B cell (primary cell): ENCODE measurements at regions of chr19 and their contacts with region 1.

Region 1: DNA sequence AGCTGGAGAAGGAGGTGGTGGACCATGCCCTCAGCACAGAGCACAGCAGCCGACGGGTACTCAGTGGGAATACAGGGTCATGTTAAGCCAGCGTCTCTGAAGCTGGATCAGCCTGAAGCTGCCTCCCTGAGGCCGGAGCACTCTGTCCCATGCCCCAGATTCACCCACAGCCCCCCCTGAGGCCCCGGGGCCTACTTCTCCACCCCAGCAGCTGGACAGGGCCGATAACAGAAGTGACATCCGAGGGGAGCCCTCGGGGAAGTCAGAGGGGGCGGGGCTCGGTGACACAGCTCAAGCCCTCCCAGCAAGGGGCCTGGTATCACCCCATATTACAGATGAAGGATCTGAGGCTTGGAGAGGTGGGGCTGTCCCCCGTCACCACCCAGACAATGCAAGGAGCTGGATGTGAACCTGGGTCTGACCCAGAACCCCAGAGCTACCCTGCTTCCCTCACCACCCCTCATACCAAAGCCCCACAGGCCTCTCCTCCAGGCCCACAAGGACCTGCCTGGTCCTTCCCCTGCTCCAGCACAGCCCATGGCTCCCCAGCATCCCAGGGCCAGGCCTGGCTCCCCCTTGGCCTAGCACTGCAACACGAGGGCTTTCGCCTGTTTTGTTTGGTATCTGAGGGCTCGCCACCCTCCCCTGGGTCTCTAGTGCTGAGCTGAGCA is 5.7 kb downstream of the R3HDM4 start:
- DNase-seq: peak; percentile 86
- ATAC-seq: peak; percentile 28
- H3K4me3 ChIP-seq: peak overlapping the region in 4 of 5 experiments; percentile 6 to 38 (median 28)
- H3K4me3 Mint-ChIP-seq: peak overlapping the region; percentile 85
- H3K27ac ChIP-seq: peak overlapping the region; percentile 97 to 99
- H3K27ac Mint-ChIP-seq: peak overlapping the region; percentile 100
- H3K4me1 ChIP-seq: peaks cover 52 to 65% of the 10 kb centered on the region in 2 donors
- H3K4me1 Mint-ChIP-seq: peaks cover 52% of the 10 kb centered on the region
- H3K27me3 ChIP-seq: no peaks in the 10 kb centered on the region
- H3K27me3 Mint-ChIP-seq: no peaks in the 10 kb centered on the region
- CTCF ChIP-seq: no peak

Region 2: GRCh38 chr19:892243-893050 is 14.9 kb before region 1 on chr19:
- CTCF ChIA-PET with region 1: interaction called, 35 read pairs
- POLR2A ChIA-PET with region 1: interaction called, 56 read pairs
- intact Hi-C with region 1: loop called (anchors 1 kb)
- DNase-seq: peak; percentile 50
- ATAC-seq: peak; percentile 60
- H3K4me3 ChIP-seq: peak overlapping the region; percentile 18 to 91 (median 76)
- H3K4me3 Mint-ChIP-seq: peak overlapping the region; percentile 95
- H3K27ac ChIP-seq: peak overlapping the region; percentile 68 to 98
- H3K27ac Mint-ChIP-seq: peak overlapping the region; percentile 100
- H3K4me1 ChIP-seq: peaks cover 5 to 37% of the 10 kb centered on the region in 2 donors
- H3K4me1 Mint-ChIP-seq: peaks cover 17% of the 10 kb centered on the region
- H3K27me3 ChIP-seq: no peaks in the 10 kb centered on the region
- H3K27me3 Mint-ChIP-seq: no peaks in the 10 kb centered on the region
- CTCF ChIP-seq: no peak

Region 3: DNA sequence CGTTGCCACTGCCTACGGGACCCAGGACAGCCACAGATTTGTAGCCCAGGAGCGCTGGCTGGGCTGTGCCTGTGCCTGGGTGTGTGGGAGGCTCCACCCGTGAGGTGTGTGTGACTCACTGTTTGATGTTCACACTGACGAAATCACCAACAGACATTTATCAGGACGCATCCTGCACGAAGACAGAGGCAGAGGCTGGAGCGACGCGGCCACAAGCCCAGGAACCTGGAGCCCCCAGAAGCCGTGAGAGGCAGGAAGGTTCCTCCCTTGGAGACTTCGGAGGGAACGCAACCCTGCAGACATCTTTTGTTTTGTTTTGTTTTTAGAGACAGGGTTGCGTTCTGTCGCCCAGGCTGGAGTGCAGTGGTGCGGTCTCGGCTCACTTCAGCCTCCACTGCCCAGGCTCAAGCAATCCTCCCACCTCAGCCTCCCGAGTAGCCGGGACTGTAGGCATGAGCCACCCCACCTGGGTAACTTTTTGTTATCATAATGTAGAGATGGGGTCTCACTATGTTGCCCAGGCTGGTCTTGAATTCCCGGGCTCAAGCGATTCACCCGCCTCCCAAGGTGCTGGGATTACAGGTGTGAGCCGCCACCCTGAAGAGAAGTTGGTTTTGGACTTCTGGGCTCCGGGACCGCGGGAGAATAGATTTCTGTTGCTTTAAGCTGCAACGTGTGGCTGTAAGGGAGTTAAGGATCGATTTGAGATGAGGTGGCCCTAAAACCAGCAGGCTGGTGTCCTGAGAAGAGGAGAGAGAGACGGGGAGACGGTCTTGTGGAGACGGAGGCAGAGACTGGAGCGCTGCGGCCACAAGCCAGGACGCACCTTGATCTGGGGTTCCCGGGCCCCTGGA is 51.9 kb after region 1 on chr19:
- CTCF ChIA-PET with region 1: interaction called, 3 read pairs
- POLR2A ChIA-PET with region 1: interaction called, 13 read pairs
- intact Hi-C with region 1: no loop called
- DNase-seq: no peak
- ATAC-seq: no peak
- H3K4me3 ChIP-seq: no peak overlapping the region
- H3K4me3 Mint-ChIP-seq: no peak overlapping the region
- H3K27ac ChIP-seq: no peak overlapping the region
- H3K27ac Mint-ChIP-seq: no peak overlapping the region
- H3K4me1 ChIP-seq: peaks cover 3 to 14% of the 10 kb centered on the region in 2 donors
- H3K4me1 Mint-ChIP-seq: peaks cover 7% of the 10 kb centered on the region
- H3K27me3 ChIP-seq: no peaks in the 10 kb centered on the region
- H3K27me3 Mint-ChIP-seq: no peaks in the 10 kb centered on the region
- CTCF ChIP-seq: no peak

Region 4: GRCh38 chr19:1141944-1142343 is 234.6 kb after region 1 on chr19:
- CTCF ChIA-PET with region 1: no interaction called
- POLR2A ChIA-PET with region 1: no interaction called
- intact Hi-C with region 1: no loop called
- DNase-seq: no peak
- ATAC-seq: no peak
- H3K4me3 ChIP-seq: no peak overlapping the region
- H3K4me3 Mint-ChIP-seq: no peak overlapping the region
- H3K27ac ChIP-seq: no peak overlapping the region
- H3K27ac Mint-ChIP-seq: no peak overlapping the region
- H3K4me1 ChIP-seq: no peaks in the 10 kb centered on the region
- H3K4me1 Mint-ChIP-seq: no peaks in the 10 kb centered on the region
- H3K27me3 ChIP-seq: no peaks in the 10 kb centered on the region
- H3K27me3 Mint-ChIP-seq: no peaks in the 10 kb centered on the region
- CTCF ChIP-seq: no peak

Region 5: GRCh38 chr19:1260636-1261537 is 353.6 kb after region 1 on chr19:
- CTCF ChIA-PET with region 1: no interaction called
- POLR2A ChIA-PET with region 1: interaction called, 12 read pairs
- intact Hi-C with region 1: loop called (anchors 5 kb)
- DNase-seq: peak; percentile 98
- ATAC-seq: peak; percentile 59
- H3K4me3 ChIP-seq: peak overlapping the region; percentile 61 to 95 (median 81)
- H3K4me3 Mint-ChIP-seq: peak overlapping the region; percentile 97
- H3K27ac ChIP-seq: peak overlapping the region; percentile 99 to 100
- H3K27ac Mint-ChIP-seq: peak overlapping the region; percentile 99
- H3K4me1 ChIP-seq: peaks cover 68 to 91% of the 10 kb centered on the region in 2 donors
- H3K4me1 Mint-ChIP-seq: peaks cover 78% of the 10 kb centered on the region
- H3K27me3 ChIP-seq: no peaks in the 10 kb centered on the region
- H3K27me3 Mint-ChIP-seq: no peaks in the 10 kb centered on the region
- CTCF ChIP-seq: no peak

Region 6: DNA sequence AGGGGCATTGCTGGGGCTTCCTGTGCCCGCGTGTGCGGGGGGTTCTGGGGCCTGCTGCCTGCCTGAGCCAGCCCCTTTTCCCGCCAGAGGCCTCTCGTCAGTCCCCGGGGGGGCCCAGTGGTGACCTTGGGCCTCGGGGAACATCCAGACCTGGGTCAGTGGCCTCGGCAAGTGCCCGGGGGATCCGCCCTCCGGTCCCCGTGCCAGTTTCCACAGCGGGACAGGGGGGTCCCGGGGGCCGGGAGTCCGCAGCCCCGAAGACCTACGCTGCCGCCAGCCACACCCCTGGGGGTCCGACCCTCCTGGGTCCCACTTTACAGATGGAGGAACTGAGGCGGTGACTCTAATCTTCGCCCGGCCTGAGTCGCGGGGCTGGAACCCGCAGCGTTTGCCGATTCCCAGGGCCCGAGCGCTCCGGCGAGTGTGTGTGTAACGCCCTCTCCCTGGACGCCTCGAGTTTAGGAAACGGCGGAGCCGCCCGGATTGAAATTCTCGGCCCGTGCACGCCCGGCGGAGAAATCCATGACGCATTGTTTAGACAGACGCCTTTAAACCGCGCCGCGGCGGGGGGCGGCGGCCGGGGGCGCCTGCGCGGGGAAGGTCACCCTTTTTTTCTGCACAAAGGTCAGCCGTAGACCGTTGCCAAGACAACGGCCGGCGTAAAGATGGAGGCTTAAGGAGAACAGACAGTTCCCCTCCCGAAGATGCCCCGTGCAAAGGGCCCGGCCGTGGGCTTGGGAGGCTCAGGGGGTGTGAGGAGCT is 417.7 kb after region 1 on chr19:
- CTCF ChIA-PET with region 1: no interaction called
- POLR2A ChIA-PET with region 1: no interaction called
- intact Hi-C with region 1: no loop called
- DNase-seq: peak; percentile 42
- ATAC-seq: no peak
- H3K4me3 ChIP-seq: peak overlapping the region in 4 of 5 experiments; percentile 8 to 33 (median 25)
- H3K4me3 Mint-ChIP-seq: peak overlapping the region; percentile 39
- H3K27ac ChIP-seq: no peak overlapping the region
- H3K27ac Mint-ChIP-seq: no peak overlapping the region
- H3K4me1 ChIP-seq: peaks cover 12 to 15% of the 10 kb centered on the region in 2 donors
- H3K4me1 Mint-ChIP-seq: peaks cover 2% of the 10 kb centered on the region
- H3K27me3 ChIP-seq: peaks cover 0 to 51% (median 22%) of the 10 kb centered on the region in 4 experiments
- H3K27me3 Mint-ChIP-seq: peaks cover 30% of the 10 kb centered on the region
- CTCF ChIP-seq: no peak